ENCODE measurements at regions of chr12 and their contacts with region 1.

Region 1: GRCh38 chr12:55073043-55074022 is 52.9 kb upstream of the OR9K2 start:
- DNase-seq: peak; percentile 86
- H3K4me3 ChIP-seq: no peak overlapping the region
- H3K27ac ChIP-seq: no peak overlapping the region
- H3K4me1 ChIP-seq: peaks cover 32% of the 10 kb centered on the region
- CTCF ChIP-seq: peak; percentile 98

Region 2: DNA sequence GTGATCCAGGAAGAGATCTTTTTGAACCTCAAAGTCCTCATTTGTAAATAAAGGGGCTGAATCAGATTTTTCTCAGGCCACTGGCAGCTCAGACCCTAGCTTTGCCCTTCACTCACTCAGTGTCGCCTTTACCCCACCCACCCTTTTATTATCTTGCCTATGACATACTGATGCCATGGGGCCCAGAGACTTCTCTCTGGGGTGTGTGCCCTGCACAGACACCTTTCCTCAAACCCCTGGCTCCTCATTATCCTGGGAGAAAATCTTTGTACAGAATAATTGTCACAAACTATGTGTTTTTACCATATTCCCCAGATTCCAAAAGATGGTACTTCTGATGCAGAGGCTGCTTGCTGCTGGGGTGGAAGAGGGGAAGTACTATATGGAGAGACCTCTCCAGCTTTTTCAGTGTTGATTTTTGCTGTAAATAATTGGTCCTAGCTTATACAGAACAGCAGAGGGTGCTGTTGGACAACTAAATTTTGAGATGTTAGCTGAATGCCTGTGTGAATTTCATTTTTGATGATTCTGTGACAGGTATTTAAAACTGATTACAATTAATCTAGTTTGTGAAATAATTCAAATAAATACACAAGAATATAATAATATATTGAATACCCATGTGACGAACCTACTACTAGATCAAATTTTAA is 371.3 kb before region 1 on chr12:
- CTCF ChIA-PET with region 1: no interaction called
- POLR2A ChIA-PET with region 1: no interaction called
- intact Hi-C with region 1: loop called (anchors 1 kb)
- DNase-seq: peak; percentile 62
- H3K4me3 ChIP-seq: no peak overlapping the region
- H3K27ac ChIP-seq: no peak overlapping the region
- H3K4me1 ChIP-seq: no peaks in the 10 kb centered on the region
- CTCF ChIP-seq: peak; percentile 89

Region 3: DNA sequence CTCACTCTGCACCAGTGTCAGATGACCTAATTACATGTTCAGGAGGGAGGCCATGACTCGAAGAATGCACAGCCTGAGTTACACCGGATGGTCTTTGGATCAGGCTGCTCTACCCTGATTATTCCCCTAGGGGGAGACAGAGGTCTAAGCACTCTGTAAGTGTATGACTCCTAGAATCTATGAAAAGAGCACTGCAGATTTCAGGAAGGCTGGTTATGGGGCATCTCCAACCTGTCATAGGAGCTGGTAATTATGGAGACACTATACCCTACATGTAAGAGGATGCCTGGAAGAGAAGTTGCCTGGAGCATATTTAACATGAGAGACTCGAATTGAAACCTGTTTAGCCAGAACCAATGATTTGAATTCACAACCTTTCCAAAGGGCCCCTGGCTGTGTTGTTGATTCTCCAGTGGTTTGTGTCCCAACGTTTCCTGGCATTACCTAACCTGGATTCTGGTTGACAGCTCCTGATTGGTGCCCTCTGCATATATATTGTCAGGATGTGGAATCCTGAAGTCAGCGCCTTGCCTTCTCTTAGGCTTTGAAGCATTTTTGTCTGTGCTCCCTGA is 219.3 kb before region 1 on chr12 and contains the start of gene MUCL1:
- CTCF ChIA-PET with region 1: no interaction called
- POLR2A ChIA-PET with region 1: no interaction called
- intact Hi-C with region 1: loop called (anchors 1 kb)
- DNase-seq: peak; percentile 67
- H3K4me3 ChIP-seq: no peak within 1 kb of the TSS
- H3K27ac ChIP-seq: no peak within 1 kb of the TSS
- H3K4me1 ChIP-seq: no peaks in the 10 kb centered on the region
- CTCF ChIP-seq: peak; percentile 93
- total RNA-seq, gene MUCL1: not detected in 2 replicates

Region 4: DNA sequence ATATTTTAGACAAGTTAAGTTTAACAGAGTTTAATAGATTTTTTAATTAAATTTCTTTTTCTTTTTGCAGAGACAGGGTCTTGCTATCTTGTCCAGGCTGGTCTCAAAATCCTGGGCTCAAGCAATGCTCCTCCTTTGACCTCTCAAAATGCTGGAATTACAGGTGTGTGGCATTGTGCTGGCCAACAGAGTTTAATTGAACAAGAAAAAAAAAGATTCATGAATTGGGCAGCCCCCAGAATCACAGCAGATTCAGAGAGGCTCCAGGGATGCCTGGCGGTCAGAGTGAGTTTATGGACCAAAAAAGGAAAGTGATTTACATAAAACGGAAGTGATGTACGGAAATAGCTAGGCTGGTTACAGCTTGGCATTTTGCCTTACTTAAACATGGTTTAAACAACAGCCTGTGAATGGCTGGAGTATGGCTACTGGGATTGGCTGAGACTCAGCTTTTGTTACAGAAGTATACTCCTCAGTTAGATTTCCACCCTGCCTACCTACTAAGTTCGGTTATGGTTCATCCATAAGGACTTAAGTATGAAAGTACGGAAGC is 74.3 kb before region 1 on chr12:
- CTCF ChIA-PET with region 1: interaction called, 72 read pairs
- POLR2A ChIA-PET with region 1: interaction called, 11 read pairs
- intact Hi-C with region 1: no loop called
- DNase-seq: peak; percentile 76
- H3K4me3 ChIP-seq: peak overlapping the region; percentile 19
- H3K27ac ChIP-seq: peak overlapping the region; percentile 44
- H3K4me1 ChIP-seq: peaks cover 40% of the 10 kb centered on the region
- CTCF ChIP-seq: no peak

Region 5: GRCh38 chr12:55132816-55133215 is 59.5 kb after region 1 on chr12:
- CTCF ChIA-PET with region 1: no interaction called
- POLR2A ChIA-PET with region 1: no interaction called
- intact Hi-C with region 1: no loop called
- DNase-seq: no peak
- H3K4me3 ChIP-seq: no peak overlapping the region
- H3K27ac ChIP-seq: no peak overlapping the region
- H3K4me1 ChIP-seq: no peaks in the 10 kb centered on the region
- CTCF ChIP-seq: peak; percentile 46; the same call in 1 of the 2 replicates

Region 6: GRCh38 chr12:55320201-55320600 is 246.9 kb after region 1 on chr12:
- CTCF ChIA-PET with region 1: no interaction called
- POLR2A ChIA-PET with region 1: no interaction called
- intact Hi-C with region 1: no loop called
- DNase-seq: no peak
- H3K4me3 ChIP-seq: no peak overlapping the region
- H3K27ac ChIP-seq: no peak overlapping the region
- H3K4me1 ChIP-seq: no peaks in the 10 kb centered on the region
- CTCF ChIP-seq: no peak

Measured in OCI-LY7 (cell line).